A673 (cell line): ENCODE measurements at regions of chr10 and their contacts with region 1.

Region 1: DNA sequence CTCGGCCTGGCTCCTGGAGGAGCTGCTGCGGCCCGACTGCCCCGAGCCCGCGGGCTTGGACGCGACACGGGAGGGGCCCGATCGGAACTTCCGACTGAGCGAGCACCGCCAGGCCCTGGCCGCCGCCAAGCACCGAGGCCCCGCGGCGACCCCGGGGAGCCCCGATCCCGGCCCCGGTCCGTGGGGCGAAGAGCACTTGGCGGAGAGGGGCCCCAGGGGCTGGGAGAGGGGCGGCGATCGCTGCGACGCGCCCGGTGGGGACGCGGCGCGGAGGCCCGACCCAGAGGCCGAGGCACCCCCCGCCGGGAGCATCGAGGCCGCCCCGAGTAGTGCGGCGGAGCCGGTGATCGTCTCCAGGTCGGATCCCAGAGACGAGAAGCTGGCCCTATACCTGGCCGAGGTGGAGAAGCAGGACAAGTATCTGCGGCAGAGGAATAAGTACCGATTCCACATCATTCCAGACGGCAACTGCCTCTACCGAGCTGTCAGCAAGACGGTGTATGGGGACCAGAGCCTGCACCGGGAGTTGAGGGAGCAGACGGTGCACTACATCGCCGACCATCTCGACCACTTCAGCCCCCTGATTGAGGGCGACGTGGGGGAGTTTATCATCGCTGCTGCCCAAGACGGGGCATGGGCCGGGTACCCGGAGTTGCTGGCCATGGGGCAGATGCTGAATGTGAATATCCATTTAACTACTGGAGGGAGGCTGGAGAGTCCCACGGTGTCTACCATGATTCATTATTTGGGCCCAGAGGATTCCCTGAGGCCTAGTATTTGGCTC is 1.3 kb downstream of the OTUD1 start:
- DNase-seq: peak; percentile 61
- H3K4me3 ChIP-seq: peak overlapping the region; percentile 75
- H3K27ac ChIP-seq: peak overlapping the region; percentile 84
- H3K4me1 ChIP-seq: peaks cover 6% of the 10 kb centered on the region
- H3K27me3 ChIP-seq: no peaks in the 10 kb centered on the region
- CTCF ChIP-seq: no peak

Region 2: DNA sequence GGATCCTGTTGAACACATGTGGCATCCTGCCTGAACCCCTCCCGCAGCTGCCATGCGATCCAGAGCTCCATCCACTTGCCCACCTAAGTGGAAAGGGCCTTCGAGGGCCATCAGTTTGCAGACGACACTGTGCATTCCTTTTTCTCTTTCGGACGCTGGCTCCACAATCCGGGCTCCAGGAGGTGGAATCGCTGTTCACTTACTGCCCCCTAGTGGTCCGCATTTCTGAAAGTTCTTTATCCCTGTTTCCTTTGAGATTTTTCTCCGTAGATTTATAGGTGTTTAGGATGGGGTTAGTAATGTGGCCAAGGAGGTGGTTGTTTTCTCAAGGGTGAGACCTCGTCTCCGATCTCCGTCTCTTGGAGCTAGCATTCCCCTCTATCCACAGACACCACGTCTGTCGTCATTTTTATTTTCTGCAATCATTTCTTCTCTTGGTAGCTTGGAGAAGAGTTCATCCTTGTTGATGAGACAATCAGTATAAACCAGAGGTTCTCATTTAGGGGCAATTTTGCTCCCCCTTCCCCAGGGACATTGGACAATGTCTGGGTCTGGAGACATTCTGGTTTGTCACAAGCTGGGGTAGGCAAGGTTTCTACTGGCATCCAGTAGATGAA is 1079.0 kb after region 1 on chr10:
- CTCF ChIA-PET with region 1: no interaction called
- POLR2A ChIA-PET with region 1: no interaction called
- intact Hi-C with region 1: loop called (anchors 10 kb)
- DNase-seq: peak; percentile 88
- H3K4me3 ChIP-seq: no peak overlapping the region
- H3K27ac ChIP-seq: peak overlapping the region; percentile 71
- H3K4me1 ChIP-seq: peaks cover 41% of the 10 kb centered on the region
- H3K27me3 ChIP-seq: no peaks in the 10 kb centered on the region
- CTCF ChIP-seq: peak; percentile 90